ENCODE measurements at regions of chr12 and their contacts with region 1.

Region 1: DNA sequence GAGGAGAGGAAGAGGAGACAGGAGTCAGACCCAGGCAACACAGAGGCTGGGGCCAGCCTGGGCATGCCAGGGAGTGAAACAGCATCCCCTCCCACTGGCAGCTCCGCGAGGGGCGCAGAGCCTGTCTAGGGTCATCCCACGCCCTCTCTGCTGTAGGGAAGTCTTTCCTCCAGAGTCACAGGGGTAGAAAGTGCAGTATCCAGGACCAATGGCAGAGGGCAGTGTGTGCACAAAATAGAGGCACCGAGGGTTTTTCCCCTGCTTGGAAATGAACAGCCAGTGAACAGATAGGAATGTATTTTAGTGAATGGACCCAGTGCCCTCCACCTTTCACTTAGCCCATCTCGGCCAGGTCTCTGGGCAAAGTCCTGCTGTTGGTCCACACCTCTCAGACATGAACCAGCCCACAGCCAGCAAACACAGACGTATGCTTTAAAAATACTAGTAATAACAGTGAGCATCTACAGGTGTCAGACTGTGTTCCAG is 9.4 kb upstream of the KRT74 start:
- DNase-seq: peak; percentile 91
- H3K4me3 Mint-ChIP-seq: no peak overlapping the region
- H3K27ac Mint-ChIP-seq: no peak overlapping the region
- H3K4me1 Mint-ChIP-seq: peaks cover 28% of the 10 kb centered on the region
- H3K27me3 Mint-ChIP-seq: peaks cover 8% of the 10 kb centered on the region

Region 2: GRCh38 chr12:52506858-52507715 is 75.9 kb before region 1 on chr12:
- intact Hi-C with region 1: no loop called
- DNase-seq: peak; percentile 49
- H3K4me3 Mint-ChIP-seq: no peak overlapping the region
- H3K27ac Mint-ChIP-seq: no peak overlapping the region
- H3K4me1 Mint-ChIP-seq: no peaks in the 10 kb centered on the region
- H3K27me3 Mint-ChIP-seq: peaks cover 41% of the 10 kb centered on the region

Region 3: GRCh38 chr12:52870351-52871290 is 287.6 kb after region 1 on chr12:
- intact Hi-C with region 1: loop called (anchors 1 kb)
- DNase-seq: peak; percentile 93
- H3K4me3 Mint-ChIP-seq: no peak overlapping the region
- H3K27ac Mint-ChIP-seq: no peak overlapping the region
- H3K4me1 Mint-ChIP-seq: peaks cover 31% of the 10 kb centered on the region
- H3K27me3 Mint-ChIP-seq: peaks cover 3% of the 10 kb centered on the region

Region 4: DNA sequence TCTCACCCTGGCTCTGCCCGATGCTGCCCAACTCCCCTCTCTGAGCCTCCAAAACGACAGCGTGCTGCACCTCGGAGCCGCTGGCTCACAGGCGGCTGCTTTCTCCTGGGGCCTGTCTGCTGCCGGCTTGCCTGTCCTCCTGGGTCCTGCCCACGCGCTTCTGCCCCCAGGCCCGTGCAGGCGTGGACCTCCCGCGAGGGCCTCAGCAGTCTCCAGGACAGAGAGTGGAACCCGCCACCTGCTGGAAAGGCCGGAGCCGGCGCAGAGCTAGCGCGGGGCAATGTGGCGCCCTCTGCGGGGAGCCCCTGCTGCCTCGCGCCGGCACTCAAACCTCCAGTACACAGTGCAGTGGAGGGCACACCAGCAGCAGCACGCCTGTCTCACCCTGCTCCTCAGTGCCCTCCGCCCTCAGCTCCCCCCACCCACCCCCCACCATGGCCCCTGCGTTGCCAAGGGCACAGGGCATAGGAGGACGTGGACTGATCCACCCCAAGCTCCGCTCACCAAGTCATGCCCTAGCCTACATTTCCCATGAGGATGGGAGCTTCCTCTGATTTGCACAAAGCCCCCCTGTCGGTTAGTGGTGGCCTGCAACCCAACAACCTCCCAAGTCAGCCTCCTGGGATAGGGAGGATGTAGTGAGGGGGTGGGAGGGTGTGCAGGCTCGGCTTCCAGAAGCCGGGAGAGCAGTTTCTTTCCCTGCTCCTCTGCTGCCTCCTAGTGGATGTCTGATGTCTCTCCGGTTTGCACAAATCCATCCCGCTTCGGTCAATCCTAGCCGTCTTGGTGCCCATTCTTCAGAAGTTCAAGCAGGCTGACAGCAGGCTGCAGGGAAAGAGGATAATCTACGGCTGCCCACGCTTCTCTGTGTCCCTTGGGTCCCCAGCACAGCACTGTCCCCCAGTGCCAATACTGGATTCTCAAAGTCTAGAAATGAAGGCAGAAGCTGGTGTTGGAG is 296.7 kb after region 1 on chr12:
- intact Hi-C with region 1: loop called (anchors 1 kb)
- DNase-seq: peak; percentile 93
- H3K4me3 Mint-ChIP-seq: peak overlapping the region; percentile 82
- H3K27ac Mint-ChIP-seq: no peak overlapping the region
- H3K4me1 Mint-ChIP-seq: peaks cover 8% of the 10 kb centered on the region
- H3K27me3 Mint-ChIP-seq: peaks cover 8% of the 10 kb centered on the region

Region 5: DNA sequence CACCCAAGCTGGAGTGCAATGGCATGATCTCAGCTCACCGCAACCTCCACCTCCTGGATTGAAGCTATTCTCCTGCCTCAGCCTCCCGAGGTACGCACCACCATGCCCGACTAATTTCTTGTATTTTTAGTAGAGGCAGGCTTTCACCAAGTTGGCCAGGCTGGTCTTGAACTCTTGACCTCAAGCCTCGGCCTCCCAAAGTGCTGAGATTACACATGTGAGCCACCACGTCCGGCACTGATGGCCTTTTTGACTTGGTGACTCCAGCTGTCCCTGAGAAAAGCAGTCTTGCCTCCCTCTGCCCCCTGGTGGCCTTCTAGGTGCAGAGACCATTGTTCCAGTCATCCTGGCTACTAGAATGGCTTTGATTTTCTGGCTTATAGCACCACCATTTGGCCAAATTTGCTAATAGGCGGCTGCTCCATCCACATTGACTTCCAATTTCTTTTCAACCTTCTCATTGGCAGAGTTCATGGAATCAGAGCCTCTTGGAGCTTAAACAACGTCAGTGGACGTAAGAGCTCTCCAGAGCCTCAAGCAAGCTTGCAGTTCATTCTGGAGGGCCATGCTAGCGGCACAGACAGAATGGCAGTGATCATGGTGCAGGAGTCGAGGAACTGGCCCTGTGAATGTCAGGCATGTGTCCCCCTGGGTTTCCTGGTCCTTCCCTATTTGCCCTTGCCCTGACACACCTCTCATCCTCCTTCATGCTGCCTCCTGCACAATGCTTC is 397.8 kb after region 1 on chr12:
- intact Hi-C with region 1: loop called (anchors 1 kb)
- DNase-seq: peak; percentile 94
- H3K4me3 Mint-ChIP-seq: no peak overlapping the region
- H3K27ac Mint-ChIP-seq: no peak overlapping the region
- H3K4me1 Mint-ChIP-seq: no peaks in the 10 kb centered on the region
- H3K27me3 Mint-ChIP-seq: peaks cover 28% of the 10 kb centered on the region